Activated T-helper 2 cell treated with anti-CD3 and anti-CD28 coated beads, Interferon-gamma antibody, Interleukin-2, Interleukin-4, amounts not matched to agents 10 μg/mL and 5 μg/mL and 100 μg/mL, durations not matched to agents 14 hours and 24 hours and 36 hours (primary cell): ENCODE measurements at regions of chr1 and their contacts with region 1.

Region 1: DNA sequence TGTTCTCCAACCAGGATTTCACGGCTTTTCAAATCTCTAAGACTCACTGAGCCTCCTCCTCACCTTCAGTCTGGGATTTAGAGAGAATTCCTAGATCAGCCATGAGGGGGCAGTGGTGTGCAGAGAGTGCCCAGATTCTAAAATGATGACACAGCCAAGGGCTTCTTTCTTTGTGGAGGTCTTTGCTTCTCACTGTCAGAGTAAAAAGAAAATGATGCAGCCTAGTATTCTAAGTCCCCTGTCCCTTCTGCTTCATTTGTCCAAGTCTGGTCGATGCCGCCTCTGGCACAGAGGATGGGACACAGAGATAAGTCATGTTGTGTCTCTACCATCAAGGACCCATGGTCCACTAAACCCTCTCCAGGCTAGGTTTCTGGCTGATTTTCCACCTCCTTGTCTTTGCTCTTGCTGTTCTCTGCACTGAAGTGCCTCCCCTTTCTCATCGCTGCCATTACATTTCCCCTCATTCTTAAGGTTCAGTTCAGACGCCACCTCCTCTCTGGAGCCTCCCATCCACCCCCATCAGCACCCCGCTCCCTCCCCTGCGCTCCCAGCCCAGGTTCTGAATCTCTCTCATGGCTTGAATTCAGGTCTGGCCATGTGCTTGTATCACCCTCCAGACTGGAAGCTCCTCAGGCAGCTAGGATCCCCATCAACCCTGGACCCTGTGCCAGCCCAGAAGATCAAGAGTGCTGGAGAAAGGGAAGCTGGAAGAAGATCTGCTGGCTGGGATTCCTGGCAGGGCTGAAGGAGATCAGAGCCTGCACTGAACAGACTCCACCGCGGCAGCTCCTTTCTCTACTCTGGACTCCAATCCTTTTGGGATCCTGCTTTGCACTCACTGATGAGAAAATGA is 12.0 kb upstream of the TINAGL1 start:
- DNase-seq: peak; percentile 32
- H3K4me3 Mint-ChIP-seq: no peak overlapping the region
- H3K27ac Mint-ChIP-seq: no peak overlapping the region
- H3K4me1 Mint-ChIP-seq: no peaks in the 10 kb centered on the region
- H3K27me3 Mint-ChIP-seq: peaks cover 21% of the 10 kb centered on the region

Region 2: DNA sequence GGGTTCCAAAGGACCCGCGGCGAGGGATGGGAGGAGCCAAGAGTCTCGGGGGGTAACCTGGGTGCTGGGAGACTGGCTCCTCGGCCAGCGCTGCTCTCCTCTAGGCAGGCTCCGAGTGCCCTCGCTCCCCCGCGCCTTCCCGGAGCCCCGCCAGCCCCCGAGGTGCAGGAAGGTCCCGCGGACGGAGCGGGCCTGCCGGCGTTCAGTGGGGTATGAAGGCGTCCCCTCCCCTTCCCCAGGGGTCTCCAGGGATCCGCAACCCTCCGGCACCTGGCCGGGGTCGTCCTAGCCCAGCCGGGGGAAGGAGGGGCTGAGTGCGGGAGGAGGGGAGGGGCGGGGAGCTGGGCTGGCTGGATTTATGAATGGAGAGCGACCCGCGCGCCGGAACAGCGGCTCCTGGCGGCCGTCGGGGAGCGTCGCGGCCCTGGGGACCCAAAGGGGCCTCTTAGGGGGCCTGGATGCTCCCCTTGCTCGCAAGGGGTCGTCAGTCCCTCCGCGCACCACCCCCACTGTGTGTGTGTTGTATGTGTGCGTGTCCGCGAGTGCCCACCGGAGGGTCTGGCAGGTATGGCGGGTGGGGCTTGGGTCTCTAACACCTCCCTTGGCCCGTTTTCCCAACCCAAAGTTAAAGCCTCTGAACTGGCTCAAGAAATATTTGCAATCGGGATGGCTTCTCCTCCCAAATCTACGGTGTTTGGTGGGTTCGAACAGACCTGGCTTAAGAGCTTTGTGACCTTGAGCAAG is 53.7 kb after region 1 on chr1:
- intact Hi-C with region 1: loop called (anchors 1 kb)
- DNase-seq: peak; percentile 23
- H3K4me3 Mint-ChIP-seq: no peak overlapping the region
- H3K27ac Mint-ChIP-seq: no peak overlapping the region
- H3K4me1 Mint-ChIP-seq: no peaks in the 10 kb centered on the region
- H3K27me3 Mint-ChIP-seq: peaks cover 25% of the 10 kb centered on the region

Region 3: GRCh38 chr1:31644560-31645273 is 80.4 kb after region 1 on chr1 and contains the start of gene PEF1:
- intact Hi-C with region 1: no loop called
- DNase-seq: peak; percentile 98
- H3K4me3 Mint-ChIP-seq: peak within 1 kb of the TSS; percentile 96
- H3K27ac Mint-ChIP-seq: peak within 1 kb of the TSS; percentile 100
- H3K4me1 Mint-ChIP-seq: peaks cover 15% of the 10 kb centered on the region
- H3K27me3 Mint-ChIP-seq: no peaks in the 10 kb centered on the region
- total RNA-seq, gene PEF1: 56.5 and 61.5 TPM in 2 replicates